GM12878 (cell line): ENCODE measurements at regions of chr1 and their contacts with region 1.

Region 1: DNA sequence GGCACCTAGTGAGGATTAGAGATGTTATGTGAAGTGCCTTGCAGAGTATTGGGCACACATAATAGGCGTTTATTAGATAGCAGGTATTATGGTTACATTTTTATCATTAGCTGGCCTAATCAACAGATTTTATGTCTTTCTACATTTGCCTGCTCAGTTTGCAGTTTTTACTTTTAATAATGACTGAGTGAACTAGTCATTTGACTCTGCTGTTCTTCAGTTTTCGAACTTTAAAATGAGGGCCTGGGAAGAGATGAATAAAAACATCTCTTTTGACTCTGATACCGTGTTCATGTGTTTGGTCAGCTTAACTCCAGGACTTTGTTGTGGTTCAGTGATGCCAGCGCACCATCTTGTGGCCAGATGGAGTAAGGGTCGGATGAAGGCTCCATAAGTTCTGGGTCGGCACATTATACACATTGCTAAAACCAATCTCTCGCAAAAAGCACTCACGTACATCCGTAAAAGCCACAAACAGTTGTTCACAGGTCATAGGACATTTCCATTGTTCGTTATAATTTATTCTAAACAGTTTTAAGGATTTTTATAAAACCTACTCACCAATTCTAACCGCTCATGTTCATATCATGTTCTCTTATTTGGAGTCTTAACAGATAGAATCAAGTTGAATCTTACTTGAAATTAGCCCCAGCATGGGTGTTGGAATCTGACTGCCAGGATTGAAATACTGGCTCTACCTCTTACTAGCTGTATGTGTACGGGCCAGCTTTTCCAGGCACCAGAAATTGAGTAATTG is 78.4 kb upstream of the GPR88 start:
- DNase-seq: peak; percentile 55
- ATAC-seq: peak; percentile 96
- H3K4me3 ChIP-seq: no peak overlapping the region
- H3K27ac ChIP-seq: no peak overlapping the region
- H3K4me1 ChIP-seq: peaks cover 4% of the 10 kb centered on the region; the same call in 1 of the 2 replicates
- H3K27me3 ChIP-seq: no peaks in the 10 kb centered on the region
- CTCF ChIP-seq: peak; percentile 83 to 96 (median 87)
- EP300 ChIP-seq: no peak
- POLR2A ChIP-seq: no peak
- RAD21 ChIP-seq: peak; percentile 98

Region 2: GRCh38 chr1:99814373-99814900 is 645.1 kb before region 1 on chr1:
- CTCF ChIA-PET with region 1: interaction called, 14 read pairs
- POLR2A ChIA-PET with region 1: no interaction called
- RAD21 ChIA-PET with region 1: interaction called, 7 read pairs
- SMC1A ChIA-PET with region 1: interaction called, 9 read pairs
- in situ Hi-C with region 1: loop called (anchors 5 kb)
- intact Hi-C with region 1: no loop called
- DNase-seq: no peak
- ATAC-seq: no peak
- H3K4me3 ChIP-seq: no peak overlapping the region
- H3K27ac ChIP-seq: no peak overlapping the region
- H3K4me1 ChIP-seq: no peaks in the 10 kb centered on the region
- H3K27me3 ChIP-seq: no peaks in the 10 kb centered on the region
- CTCF ChIP-seq: no peak
- EP300 ChIP-seq: no peak
- POLR2A ChIP-seq: no peak
- RAD21 ChIP-seq: no peak

Region 3: DNA sequence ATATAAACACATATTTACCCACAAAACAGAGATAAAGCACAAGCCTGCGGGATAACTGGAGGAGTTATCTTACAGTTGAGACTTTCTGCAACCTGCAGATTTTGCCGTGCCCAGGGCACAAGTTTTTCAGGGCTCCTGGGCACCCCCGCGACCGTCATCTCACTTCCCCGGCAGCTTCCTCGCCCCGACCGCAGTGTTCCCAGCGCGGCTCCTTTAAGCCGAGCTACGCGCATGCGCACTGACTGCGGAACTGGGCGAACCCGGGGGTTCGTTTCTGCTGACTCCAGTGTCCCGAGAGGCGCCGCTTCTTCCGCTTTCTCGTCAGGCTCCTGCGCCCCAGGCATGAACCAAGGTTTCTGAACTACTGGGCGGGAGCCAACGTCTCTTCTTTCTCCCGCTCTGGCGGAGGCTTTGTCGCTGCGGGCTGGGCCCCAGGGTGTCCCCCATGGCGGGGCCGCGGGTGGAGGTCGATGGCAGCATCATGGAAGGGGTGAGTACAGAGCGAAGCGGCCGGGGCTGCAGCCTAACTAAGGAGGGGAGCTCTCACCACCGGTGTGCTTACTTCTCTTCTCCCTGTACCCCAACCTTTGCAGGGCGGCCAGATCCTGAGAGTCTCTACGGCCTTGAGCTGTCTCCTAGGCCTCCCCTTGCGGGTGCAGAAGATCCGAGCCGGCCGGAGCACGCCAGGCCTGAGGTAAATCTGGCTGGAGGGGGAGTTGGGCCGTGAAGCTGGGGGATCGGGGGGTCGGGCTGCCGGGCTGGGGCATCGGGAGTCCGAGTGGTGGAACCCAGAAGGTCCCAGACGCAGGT is 193.4 kb before region 1 on chr1 and contains the start of gene RTCA:
- CTCF ChIA-PET with region 1: interaction called, 18 read pairs
- POLR2A ChIA-PET with region 1: no interaction called
- RAD21 ChIA-PET with region 1: interaction called, 10 read pairs
- SMC1A ChIA-PET with region 1: interaction called, 6 read pairs
- in situ Hi-C with region 1: no loop called
- intact Hi-C with region 1: no loop called
- DNase-seq: peak; percentile 74
- ATAC-seq: peak; percentile 96
- H3K4me3 ChIP-seq: peak within 1 kb of the TSS; percentile 100
- H3K27ac ChIP-seq: peak within 1 kb of the TSS; percentile 73
- H3K4me1 ChIP-seq: peaks cover 2% of the 10 kb centered on the region; the same call in 1 of the 2 replicates
- H3K27me3 ChIP-seq: no peaks in the 10 kb centered on the region
- CTCF ChIP-seq: no peak
- EP300 ChIP-seq: no peak
- POLR2A ChIP-seq: peak; percentile 83; the same call in 1 of the 2 replicates
- RAD21 ChIP-seq: no peak
- polyA plus RNA-seq, gene RTCA: 10.3 to 23.6 TPM

Region 4: DNA sequence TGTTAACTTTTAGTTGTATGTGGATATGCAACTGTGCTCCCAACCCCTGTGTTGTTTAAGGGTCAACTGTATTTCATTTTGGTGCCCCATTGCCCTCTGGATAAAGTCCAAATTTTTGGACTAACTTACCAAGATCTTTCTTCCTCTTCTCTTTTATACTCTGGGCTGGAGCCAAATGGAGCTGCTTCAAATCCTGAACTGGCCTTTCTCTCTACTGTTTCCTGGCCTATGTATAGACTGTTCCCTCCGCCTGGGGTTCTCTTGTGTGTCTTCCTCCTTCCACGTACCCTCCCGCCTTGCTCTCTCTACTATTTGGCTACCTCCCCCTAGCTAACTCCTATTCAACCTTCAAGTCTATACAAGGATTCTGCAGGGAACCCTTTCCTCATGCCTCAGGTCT is 115.6 kb before region 1 on chr1:
- CTCF ChIA-PET with region 1: no interaction called
- POLR2A ChIA-PET with region 1: no interaction called
- RAD21 ChIA-PET with region 1: no interaction called
- SMC1A ChIA-PET with region 1: no interaction called
- in situ Hi-C with region 1: no loop called
- intact Hi-C with region 1: no loop called
- DNase-seq: no peak
- ATAC-seq: no peak
- H3K4me3 ChIP-seq: no peak overlapping the region
- H3K27ac ChIP-seq: no peak overlapping the region
- H3K4me1 ChIP-seq: no peaks in the 10 kb centered on the region
- H3K27me3 ChIP-seq: no peaks in the 10 kb centered on the region
- CTCF ChIP-seq: no peak
- EP300 ChIP-seq: no peak
- POLR2A ChIP-seq: no peak
- RAD21 ChIP-seq: no peak

Region 5: GRCh38 chr1:100387209-100387608 is 72.3 kb before region 1 on chr1:
- CTCF ChIA-PET with region 1: interaction called, 10 read pairs
- POLR2A ChIA-PET with region 1: interaction called, 4 read pairs
- RAD21 ChIA-PET with region 1: no interaction called
- SMC1A ChIA-PET with region 1: interaction called, 4 read pairs
- in situ Hi-C with region 1: no loop called
- intact Hi-C with region 1: no loop called
- DNase-seq: no peak
- ATAC-seq: peak; percentile 58
- H3K4me3 ChIP-seq: no peak overlapping the region
- H3K27ac ChIP-seq: peak overlapping the region; percentile 46
- H3K4me1 ChIP-seq: peaks cover 23% of the 10 kb centered on the region
- H3K27me3 ChIP-seq: no peaks in the 10 kb centered on the region
- CTCF ChIP-seq: no peak
- EP300 ChIP-seq: no peak
- POLR2A ChIP-seq: no peak
- RAD21 ChIP-seq: no peak

Region 6: DNA sequence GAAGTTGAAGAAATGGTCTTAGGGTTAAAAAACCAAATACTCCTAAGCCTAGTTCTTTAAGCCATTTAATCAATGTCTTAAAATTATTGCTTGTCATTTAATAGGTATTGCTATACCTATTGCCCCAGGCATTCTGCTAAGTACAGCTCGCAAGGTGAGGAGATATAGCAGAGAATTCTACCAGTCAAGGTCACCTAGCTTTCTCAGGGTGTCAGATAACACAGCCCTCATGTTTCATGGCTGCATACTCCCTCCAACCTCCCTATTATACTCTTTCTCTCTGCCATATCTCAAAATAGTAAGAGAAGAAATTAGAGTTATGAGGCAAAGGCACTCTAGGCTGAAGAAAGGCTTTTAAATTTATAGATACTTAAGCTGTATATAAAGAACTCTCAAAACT is 10.0 kb after region 1 on chr1:
- CTCF ChIA-PET with region 1: interaction called, 33 read pairs
- POLR2A ChIA-PET with region 1: no interaction called
- RAD21 ChIA-PET with region 1: interaction called, 6 read pairs
- SMC1A ChIA-PET with region 1: interaction called, 6 read pairs
- in situ Hi-C with region 1: no loop called
- intact Hi-C with region 1: no loop called
- DNase-seq: no peak
- ATAC-seq: no peak
- H3K4me3 ChIP-seq: no peak overlapping the region
- H3K27ac ChIP-seq: no peak overlapping the region
- H3K4me1 ChIP-seq: no peaks in the 10 kb centered on the region
- H3K27me3 ChIP-seq: no peaks in the 10 kb centered on the region
- CTCF ChIP-seq: no peak
- EP300 ChIP-seq: no peak
- POLR2A ChIP-seq: no peak
- RAD21 ChIP-seq: no peak

Region 7: DNA sequence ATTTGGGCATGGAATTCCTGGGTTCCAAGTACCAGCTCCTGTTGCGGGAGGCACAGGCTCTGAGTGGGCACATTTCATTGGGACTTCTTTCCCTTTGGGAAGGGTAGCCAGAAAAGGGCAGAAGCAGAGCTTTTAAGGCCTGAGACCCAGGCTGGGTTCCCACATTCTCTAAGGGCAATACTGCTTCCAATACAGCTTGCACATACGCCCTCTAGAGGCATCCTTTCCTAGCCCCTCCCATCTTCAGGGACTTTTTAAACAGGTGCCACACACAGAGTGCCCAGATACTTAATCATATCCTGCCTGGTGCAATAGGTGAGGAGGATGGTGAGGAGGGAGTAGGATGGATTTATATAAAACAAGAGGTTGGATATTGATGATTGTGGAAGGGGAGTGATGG is 84.1 kb after region 1 on chr1:
- CTCF ChIA-PET with region 1: interaction called, 13 read pairs
- POLR2A ChIA-PET with region 1: no interaction called
- RAD21 ChIA-PET with region 1: interaction called, 6 read pairs
- SMC1A ChIA-PET with region 1: interaction called, 4 read pairs
- in situ Hi-C with region 1: no loop called
- intact Hi-C with region 1: loop called (anchors 5 kb)
- DNase-seq: no peak
- ATAC-seq: peak; percentile 85
- H3K4me3 ChIP-seq: no peak overlapping the region
- H3K27ac ChIP-seq: no peak overlapping the region
- H3K4me1 ChIP-seq: peaks cover 12% of the 10 kb centered on the region
- H3K27me3 ChIP-seq: peaks cover 4 to 21% of the 10 kb centered on the region in 2 experiments
- CTCF ChIP-seq: peak; percentile 50 to 69 (median 64)
- EP300 ChIP-seq: no peak
- POLR2A ChIP-seq: no peak
- RAD21 ChIP-seq: peak; percentile 58

Region 8: DNA sequence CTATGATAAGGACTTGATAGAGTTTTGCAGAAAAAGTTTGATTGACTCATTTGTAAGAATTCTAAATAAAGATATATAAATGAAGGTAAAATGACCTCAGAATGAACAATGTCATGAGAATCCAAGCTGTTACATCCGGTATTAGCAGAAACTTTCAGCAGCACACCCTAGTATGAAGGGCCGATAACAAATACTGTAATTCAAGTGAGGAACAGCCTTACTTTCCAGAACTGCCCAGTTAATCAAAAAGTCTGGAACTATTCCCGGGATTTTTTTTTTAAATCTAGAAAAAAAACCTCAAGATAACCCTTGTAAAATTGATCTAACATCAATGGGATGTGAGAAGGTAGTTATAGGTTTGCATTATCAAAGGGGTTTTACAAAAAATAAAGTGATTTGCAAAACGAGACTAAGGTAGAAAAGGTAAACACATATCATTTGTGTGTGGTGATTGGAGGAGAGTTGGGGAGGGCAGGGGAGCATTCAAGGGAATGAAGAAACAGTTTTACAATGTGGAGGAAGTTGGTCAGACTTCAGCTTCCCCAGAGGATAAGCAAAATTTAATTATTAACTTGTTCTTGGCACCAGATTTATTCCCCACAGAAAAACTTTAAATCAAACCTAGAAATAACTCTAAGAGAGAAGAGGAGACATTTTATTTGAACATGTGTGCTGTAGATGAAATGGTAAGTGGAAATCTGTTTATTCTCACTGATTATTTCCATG is 184.1 kb after region 1 on chr1:
- CTCF ChIA-PET with region 1: no interaction called
- POLR2A ChIA-PET with region 1: no interaction called
- RAD21 ChIA-PET with region 1: no interaction called
- SMC1A ChIA-PET with region 1: no interaction called
- in situ Hi-C with region 1: no loop called
- intact Hi-C with region 1: no loop called
- DNase-seq: no peak
- ATAC-seq: no peak
- H3K4me3 ChIP-seq: no peak overlapping the region
- H3K27ac ChIP-seq: no peak overlapping the region
- H3K4me1 ChIP-seq: no peaks in the 10 kb centered on the region
- H3K27me3 ChIP-seq: no peaks in the 10 kb centered on the region; a peak in 1 of 4 replicates
- CTCF ChIP-seq: no peak
- EP300 ChIP-seq: no peak
- POLR2A ChIP-seq: no peak
- RAD21 ChIP-seq: no peak

Region 9: GRCh38 chr1:100708476-100709062 is 249.0 kb after region 1 on chr1:
- CTCF ChIA-PET with region 1: no interaction called
- POLR2A ChIA-PET with region 1: no interaction called
- RAD21 ChIA-PET with region 1: no interaction called
- SMC1A ChIA-PET with region 1: no interaction called
- in situ Hi-C with region 1: no loop called
- intact Hi-C with region 1: no loop called
- DNase-seq: no peak
- ATAC-seq: no peak
- H3K4me3 ChIP-seq: no peak overlapping the region
- H3K27ac ChIP-seq: no peak overlapping the region
- H3K4me1 ChIP-seq: no peaks in the 10 kb centered on the region
- H3K27me3 ChIP-seq: no peaks in the 10 kb centered on the region
- CTCF ChIP-seq: no peak
- EP300 ChIP-seq: no peak
- POLR2A ChIP-seq: no peak
- RAD21 ChIP-seq: no peak